ENCODE measurements at regions of chr1 and their contacts with region 1.

Region 1: GRCh38 chr1:151106894-151107293 is 36.3 kb downstream of the GABPB2 start:
- DNase-seq: no peak
- H3K4me3 ChIP-seq: no peak overlapping the region
- H3K27ac ChIP-seq: no peak overlapping the region
- H3K4me1 ChIP-seq: no peaks in the 10 kb centered on the region
- H3K27me3 ChIP-seq: no peaks in the 10 kb centered on the region
- CTCF ChIP-seq: no peak

Region 2: DNA sequence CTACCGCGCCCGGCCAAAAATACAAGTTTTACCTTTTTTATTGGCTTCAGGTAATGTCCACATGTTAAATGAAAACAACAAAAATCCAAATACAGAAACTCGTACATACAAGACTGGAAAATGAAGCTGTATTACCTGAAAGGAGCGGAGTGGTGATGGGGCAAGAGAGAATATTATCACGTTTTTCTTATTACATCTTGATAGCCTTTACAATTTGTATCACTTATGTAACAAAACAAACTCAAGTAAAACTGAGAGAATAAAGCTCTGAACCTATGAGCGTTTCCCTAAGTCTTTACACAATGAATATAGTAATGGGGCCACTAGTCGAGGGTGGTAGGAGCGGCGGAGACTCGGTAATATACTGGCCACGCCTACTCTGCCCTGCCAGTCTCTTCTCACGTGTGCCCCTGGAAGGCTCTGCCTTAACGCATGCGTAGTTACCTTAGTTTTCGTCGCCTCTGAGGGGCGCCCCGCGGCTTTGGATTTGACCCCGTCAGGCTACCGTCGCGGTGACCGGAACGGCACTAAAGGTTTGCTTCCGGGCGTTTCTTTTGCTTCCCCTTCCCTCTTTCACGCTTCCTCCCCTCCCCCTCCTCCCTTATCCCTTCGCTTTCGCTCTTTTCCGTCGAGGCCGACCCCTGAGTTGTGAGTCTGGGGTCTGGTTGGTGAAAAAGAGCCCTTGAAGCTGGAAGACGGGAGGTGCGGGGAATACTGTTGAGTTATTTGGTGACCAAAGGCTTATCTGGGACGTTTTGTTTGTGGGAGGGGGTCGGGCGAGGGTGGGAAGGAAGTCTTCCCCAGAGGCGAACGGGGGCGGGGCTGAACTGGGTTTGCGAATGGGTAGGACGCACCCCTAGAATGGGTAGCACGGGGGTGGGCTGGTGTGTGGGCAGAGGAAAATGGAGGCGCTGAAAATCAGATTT is 180.8 kb before region 1 on chr1 and contains the start of gene SETDB1:
- intact Hi-C with region 1: no loop called
- DNase-seq: peak; percentile 94
- H3K4me3 ChIP-seq: peak within 1 kb of the TSS; percentile 86
- H3K27ac ChIP-seq: peak within 1 kb of the TSS; percentile 87
- H3K4me1 ChIP-seq: peaks cover 18% of the 10 kb centered on the region
- H3K27me3 ChIP-seq: no peaks in the 10 kb centered on the region
- CTCF ChIP-seq: no peak
- total RNA-seq, gene SETDB1: 17.2 TPM

Region 3: DNA sequence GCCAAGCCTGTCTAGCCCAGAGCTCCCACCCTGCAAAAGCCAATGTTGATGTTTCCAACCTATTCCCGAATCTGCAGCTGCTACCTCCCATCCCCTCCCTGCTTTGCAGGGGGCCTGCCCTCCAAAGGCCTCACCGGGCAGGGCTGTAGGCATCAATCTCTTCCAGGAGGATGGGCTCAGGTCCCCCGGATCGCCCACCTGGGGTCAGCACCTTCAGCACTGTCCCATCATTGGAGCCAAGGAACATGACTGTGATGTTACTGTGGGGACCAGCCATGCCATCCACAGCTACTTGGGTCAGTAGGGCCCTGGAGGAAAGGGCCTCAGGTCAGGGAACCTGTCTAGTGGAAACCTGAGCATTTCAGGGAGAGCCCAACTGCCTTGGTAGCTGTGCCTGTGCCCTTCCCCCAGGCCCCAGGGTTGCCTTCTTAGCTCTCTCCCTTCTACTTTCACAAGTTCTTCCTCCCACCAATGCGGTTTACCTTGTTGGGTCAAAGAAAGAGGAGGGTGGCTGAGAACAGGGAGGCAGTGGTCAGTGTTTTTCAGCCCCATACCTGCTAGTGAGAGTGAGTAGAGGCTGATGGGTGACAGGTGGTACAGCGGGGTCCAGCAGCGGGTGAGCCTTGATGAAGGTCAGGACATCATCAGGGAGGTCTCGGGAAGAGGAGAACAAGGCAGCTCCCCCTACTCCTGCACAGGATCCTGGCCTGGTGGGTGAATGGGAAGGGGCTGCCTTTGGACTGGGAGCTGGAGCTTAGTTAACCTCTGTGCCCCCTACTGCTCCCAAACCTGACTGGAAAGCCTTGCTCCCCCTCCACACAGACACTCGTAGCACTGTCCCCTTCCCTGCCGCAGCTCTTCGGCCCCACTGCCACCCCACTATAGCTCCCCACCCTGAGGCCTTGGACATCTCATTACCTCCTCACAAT is 28.8 kb after region 1 on chr1:
- intact Hi-C with region 1: loop called (anchors 2 kb)
- DNase-seq: no peak
- H3K4me3 ChIP-seq: no peak overlapping the region
- H3K27ac ChIP-seq: no peak overlapping the region
- H3K4me1 ChIP-seq: peaks cover 22% of the 10 kb centered on the region
- H3K27me3 ChIP-seq: no peaks in the 10 kb centered on the region
- CTCF ChIP-seq: no peak

Measured in left ventricle myocardium inferior (tissue), 1 donor.